KBM-7 (cell line): ENCODE measurements at regions of chr2 and their contacts with region 1.

Region 1: DNA sequence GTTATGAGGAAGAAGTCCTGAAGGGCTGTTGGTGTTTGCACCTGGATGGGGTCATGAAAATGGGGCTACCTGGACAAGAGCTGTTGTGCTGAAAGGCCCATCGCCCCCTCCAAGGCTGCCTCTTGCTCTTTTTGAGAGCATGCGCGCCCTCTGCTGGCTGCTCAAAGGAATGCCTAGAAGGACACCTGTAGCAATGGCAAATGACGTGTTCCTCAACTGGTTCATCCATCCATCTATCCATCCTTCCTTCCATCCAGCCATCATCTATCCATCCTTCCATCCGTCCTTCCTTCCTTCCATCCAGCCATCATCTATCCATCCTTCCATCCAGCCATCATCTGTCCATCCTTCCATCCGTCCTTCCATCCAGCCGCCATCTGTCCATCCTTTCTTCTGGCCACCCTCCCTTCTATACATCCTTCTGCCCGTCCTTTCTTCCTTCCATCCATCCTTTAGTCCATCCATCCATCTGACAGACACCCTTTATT is 17.2 kb upstream of the RPL31 start:
- DNase-seq: peak; percentile 67

Region 2: GRCh38 chr2:100610381-100610831 is 374.5 kb before region 1 on chr2:
- in situ Hi-C with region 1: loop called (anchors 25 kb)
- DNase-seq: peak; percentile 70